CD4-positive, alpha-beta T cell (primary cell): ENCODE measurements at regions of chr1 and their contacts with region 1.

Region 1: DNA sequence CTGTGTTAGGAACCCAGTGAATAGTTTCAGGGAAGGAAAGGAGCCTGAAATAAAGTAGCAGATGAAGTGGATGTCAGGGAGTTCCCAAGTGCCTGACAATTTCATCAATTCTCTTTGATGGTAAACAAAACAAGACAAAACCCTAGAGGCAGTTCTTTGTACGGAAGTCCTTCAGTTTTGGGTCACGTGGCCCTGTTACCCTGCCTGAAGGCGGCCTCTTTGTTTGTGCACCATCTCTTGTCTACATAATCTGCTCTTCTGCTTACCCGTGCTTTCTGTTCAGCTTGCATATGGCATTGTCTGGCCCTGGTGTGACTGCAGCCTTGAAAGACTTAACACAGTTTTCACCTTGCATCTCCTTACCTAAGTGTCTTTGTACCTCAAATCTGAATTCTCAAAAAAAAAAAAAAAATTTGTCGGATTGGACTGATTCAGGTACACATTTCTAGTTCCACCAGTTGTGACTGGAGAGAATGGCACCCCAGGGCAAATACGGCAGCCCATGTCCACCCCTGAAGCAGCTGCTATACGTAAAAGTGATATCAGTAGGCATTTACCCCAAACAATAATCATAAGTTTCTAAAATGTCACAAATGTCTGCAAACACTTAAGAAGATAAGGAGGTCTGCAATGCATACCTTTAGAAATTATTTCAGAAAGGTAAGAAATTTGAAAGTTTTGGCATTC is 166.8 kb upstream of the DUSP10 start:
- DNase-seq: no peak
- ATAC-seq: no peak
- H3K4me3 ChIP-seq: no peak overlapping the region
- H3K4me3 Mint-ChIP-seq: no peak overlapping the region
- H3K27ac ChIP-seq: no peak overlapping the region
- H3K27ac Mint-ChIP-seq: no peak overlapping the region
- H3K4me1 ChIP-seq: no peaks in the 10 kb centered on the region
- H3K4me1 Mint-ChIP-seq: no peaks in the 10 kb centered on the region
- H3K27me3 ChIP-seq: no peaks in the 10 kb centered on the region
- H3K27me3 Mint-ChIP-seq: no peaks in the 10 kb centered on the region
- CTCF ChIP-seq: no peak

Region 2: DNA sequence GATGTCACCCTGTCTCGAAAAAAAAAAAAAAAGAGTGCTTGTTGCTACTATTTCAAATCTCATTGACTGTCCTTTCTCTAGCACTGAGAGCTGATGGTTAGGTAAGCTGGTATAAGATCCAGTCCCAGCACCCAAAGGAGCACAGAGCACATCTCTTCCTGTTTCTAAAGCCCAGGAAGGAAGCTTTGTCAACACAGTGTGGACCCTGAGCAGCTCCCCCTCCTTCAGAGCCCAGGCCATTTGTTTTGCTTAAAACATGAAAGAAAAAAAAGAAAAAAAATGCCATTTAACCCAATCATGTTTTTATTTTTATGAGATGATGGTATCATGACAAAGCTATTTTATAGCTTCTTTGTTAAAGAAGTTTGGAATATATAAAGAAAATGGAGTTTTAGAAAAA is 17.2 kb after region 1 on chr1:
- CTCF ChIA-PET with region 1: no interaction called
- POLR2A ChIA-PET with region 1: no interaction called
- intact Hi-C with region 1: loop called in 1 of 2 experiments (anchors 1 kb)
- DNase-seq: no peak
- ATAC-seq: no peak
- H3K4me3 ChIP-seq: no peak overlapping the region
- H3K4me3 Mint-ChIP-seq: no peak overlapping the region
- H3K27ac ChIP-seq: no peak overlapping the region
- H3K27ac Mint-ChIP-seq: no peak overlapping the region
- H3K4me1 ChIP-seq: no peaks in the 10 kb centered on the region
- H3K4me1 Mint-ChIP-seq: no peaks in the 10 kb centered on the region
- H3K27me3 ChIP-seq: no peaks in the 10 kb centered on the region
- H3K27me3 Mint-ChIP-seq: peaks cover 3% of the 10 kb centered on the region
- CTCF ChIP-seq: no peak

Region 3: GRCh38 chr1:222347627-222348026 is 438.9 kb after region 1 on chr1:
- CTCF ChIA-PET with region 1: no interaction called
- POLR2A ChIA-PET with region 1: no interaction called
- intact Hi-C with region 1: no loop called
- DNase-seq: no peak
- ATAC-seq: no peak
- H3K4me3 ChIP-seq: no peak overlapping the region
- H3K4me3 Mint-ChIP-seq: no peak overlapping the region
- H3K27ac ChIP-seq: no peak overlapping the region
- H3K27ac Mint-ChIP-seq: no peak overlapping the region
- H3K4me1 ChIP-seq: no peaks in the 10 kb centered on the region
- H3K4me1 Mint-ChIP-seq: no peaks in the 10 kb centered on the region
- H3K27me3 ChIP-seq: no peaks in the 10 kb centered on the region
- H3K27me3 Mint-ChIP-seq: no peaks in the 10 kb centered on the region
- CTCF ChIP-seq: no peak